ENCODE measurements at regions of chr1 and their contacts with region 1.

Region 1: GRCh38 chr1:167263819-167264464 is 43.3 kb downstream of the POU2F1 start:
- DNase-seq: no peak
- H3K4me3 ChIP-seq: no peak overlapping the region
- H3K27ac ChIP-seq: no peak overlapping the region
- H3K4me1 ChIP-seq: peaks cover 0 to 30% (median 5%) of the 10 kb centered on the region in 3 donors
- H3K27me3 ChIP-seq: no peaks in the 10 kb centered on the region
- CTCF ChIP-seq: no peak
- POLR2A ChIP-seq: no peak

Region 2: DNA sequence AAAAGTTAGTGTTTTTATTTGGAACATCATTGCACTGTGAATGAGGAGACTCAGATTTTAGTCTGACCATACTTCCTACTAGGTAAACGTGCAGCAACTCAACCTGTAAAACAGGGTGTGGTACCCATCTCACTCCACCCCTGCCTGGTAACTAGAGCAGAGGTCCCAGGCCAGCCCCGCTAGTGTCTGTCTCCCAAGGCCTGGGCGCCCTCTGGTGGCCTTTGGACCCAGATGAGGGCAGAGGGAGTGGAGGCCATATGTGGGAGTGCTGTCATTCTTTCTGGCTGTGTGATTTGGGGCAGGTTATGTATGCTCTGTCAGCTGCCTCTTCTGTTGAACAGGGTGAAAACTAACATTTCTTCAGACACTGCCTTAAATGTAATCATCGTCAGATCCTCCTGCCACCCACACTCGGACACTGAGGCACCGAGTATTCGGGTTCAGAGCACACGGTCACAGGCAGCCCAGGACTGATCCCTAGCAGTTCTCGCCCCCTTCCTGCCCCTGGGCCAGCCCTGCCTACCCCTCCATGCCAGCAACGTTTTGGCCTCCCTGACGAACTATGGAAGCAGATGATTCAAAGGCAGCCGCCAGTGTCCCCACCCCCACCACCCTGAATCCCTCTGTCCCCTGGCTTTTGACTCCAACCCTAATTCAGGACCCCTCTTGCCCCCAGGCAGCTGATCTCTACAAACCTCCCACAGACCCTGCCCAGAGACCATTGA is 178.3 kb after region 1 on chr1:
- intact Hi-C with region 1: loop called (anchors 5 kb)
- DNase-seq: peak; percentile 29
- H3K4me3 ChIP-seq: no peak overlapping the region
- H3K27ac ChIP-seq: peak overlapping the region in 2 of 4 donors; percentile 28 to 31
- H3K4me1 ChIP-seq: peaks cover 9 to 28% (median 11%) of the 10 kb centered on the region in 3 donors
- H3K27me3 ChIP-seq: peaks cover 0 to 18% (median 0%) of the 10 kb centered on the region in 4 donors
- CTCF ChIP-seq: peak; percentile 74 to 95 (median 89)
- POLR2A ChIP-seq: no peak

Region 3: DNA sequence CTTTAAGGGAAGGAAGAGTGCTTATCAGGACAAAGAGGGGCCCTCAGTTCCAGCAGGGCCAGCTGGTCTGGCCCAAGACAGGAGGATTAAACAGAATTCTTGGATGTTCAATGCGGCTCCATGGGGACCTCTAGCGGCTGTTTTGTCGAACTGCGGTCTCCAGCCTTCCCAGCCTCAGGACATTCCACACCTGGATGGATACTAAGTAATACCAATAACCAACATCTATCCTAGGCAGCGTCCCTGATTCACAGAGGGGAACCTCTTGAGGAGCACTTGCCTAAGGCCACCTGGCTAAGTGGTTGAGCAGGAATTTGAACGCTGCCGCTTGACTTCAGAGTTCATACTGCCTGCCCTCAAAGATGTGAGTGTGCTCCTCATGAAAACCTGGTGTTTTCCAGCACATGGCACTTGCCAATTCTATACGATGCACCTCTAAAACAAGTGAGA is 269.9 kb after region 1 on chr1:
- intact Hi-C with region 1: loop called (anchors 10 kb)
- DNase-seq: peak; percentile 17
- H3K4me3 ChIP-seq: no peak overlapping the region
- H3K27ac ChIP-seq: no peak overlapping the region
- H3K4me1 ChIP-seq: peaks cover 0 to 14% (median 3%) of the 10 kb centered on the region in 3 donors
- H3K27me3 ChIP-seq: no peaks in the 10 kb centered on the region
- CTCF ChIP-seq: peak; percentile 62 to 91 (median 83)
- POLR2A ChIP-seq: no peak